Endothelial cell of umbilical vein (primary cell): ENCODE measurements at regions of chr5 and their contacts with region 1.

Region 1: GRCh38 chr5:170434966-170435605 is 45.9 kb upstream of the KCNMB1 start:
- DNase-seq: peak; percentile 52
- H3K4me3 ChIP-seq: no peak overlapping the region
- H3K27ac ChIP-seq: no peak overlapping the region
- H3K4me1 ChIP-seq: no peaks in the 10 kb centered on the region
- H3K27me3 ChIP-seq: peaks cover 4% of the 10 kb centered on the region in 2 experiments
- CTCF ChIP-seq: peak; percentile 94 to 98
- POLR2A ChIP-seq: no peak

Region 2: GRCh38 chr5:170253844-170254455 is 181.1 kb before region 1 on chr5:
- CTCF ChIA-PET with region 1: no interaction called
- POLR2A ChIA-PET with region 1: no interaction called
- dilution Hi-C with region 1: no loop called
- intact Hi-C with region 1: no loop called
- DNase-seq: no peak
- H3K4me3 ChIP-seq: no peak overlapping the region
- H3K27ac ChIP-seq: no peak overlapping the region
- H3K4me1 ChIP-seq: no peaks in the 10 kb centered on the region
- H3K27me3 ChIP-seq: peaks cover 7 to 35% of the 10 kb centered on the region in 2 experiments
- CTCF ChIP-seq: no peak
- POLR2A ChIP-seq: no peak

Region 3: GRCh38 chr5:170491479-170491878 is 56.4 kb after region 1 on chr5:
- CTCF ChIA-PET with region 1: interaction called, 4 read pairs
- POLR2A ChIA-PET with region 1: no interaction called
- dilution Hi-C with region 1: no loop called
- intact Hi-C with region 1: loop called (anchors 1 kb)
- DNase-seq: peak; percentile 91
- H3K4me3 ChIP-seq: no peak overlapping the region
- H3K27ac ChIP-seq: peak overlapping the region; percentile 75
- H3K4me1 ChIP-seq: peaks cover 15% of the 10 kb centered on the region
- H3K27me3 ChIP-seq: no peaks in the 10 kb centered on the region
- CTCF ChIP-seq: no peak
- POLR2A ChIP-seq: peak; percentile 25

Region 4: DNA sequence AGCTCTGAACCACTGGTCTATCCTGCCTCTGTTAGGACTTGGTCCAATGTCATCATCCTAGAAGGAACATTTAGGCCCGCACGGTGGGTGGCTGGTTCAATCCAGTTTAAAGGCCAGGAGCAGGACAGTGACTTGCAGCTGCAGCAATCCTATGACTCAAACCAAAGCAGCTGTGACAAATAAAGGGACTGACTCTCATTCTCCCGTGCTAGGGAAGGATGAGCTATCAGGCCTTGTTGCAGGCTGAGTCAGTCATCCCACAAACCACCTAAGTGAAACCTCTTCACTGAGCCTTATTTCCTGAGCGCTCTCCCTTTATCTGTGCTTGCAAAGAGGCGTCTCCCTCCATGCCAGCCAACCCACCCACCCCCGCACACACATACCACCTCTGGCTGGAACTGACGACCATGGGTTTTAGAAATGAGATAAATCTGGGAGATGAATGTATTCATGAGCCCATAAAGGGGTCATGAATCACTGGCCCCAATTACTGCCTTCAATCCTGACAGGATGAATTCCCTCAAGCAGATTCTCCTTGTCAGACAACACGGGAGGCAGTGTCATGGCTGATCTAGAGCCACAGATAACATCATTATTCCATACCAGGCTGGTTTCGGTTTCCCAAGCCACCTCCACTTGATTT is 162.1 kb after region 1 on chr5:
- CTCF ChIA-PET with region 1: interaction called, 23 read pairs
- POLR2A ChIA-PET with region 1: no interaction called
- dilution Hi-C with region 1: no loop called
- intact Hi-C with region 1: no loop called
- DNase-seq: no peak
- H3K4me3 ChIP-seq: no peak overlapping the region
- H3K27ac ChIP-seq: no peak overlapping the region
- H3K4me1 ChIP-seq: peaks cover 2% of the 10 kb centered on the region
- H3K27me3 ChIP-seq: no peaks in the 10 kb centered on the region
- CTCF ChIP-seq: no peak
- POLR2A ChIP-seq: no peak

Region 5: GRCh38 chr5:170614720-170615119 is 179.6 kb after region 1 on chr5:
- CTCF ChIA-PET with region 1: interaction called, 288 read pairs
- POLR2A ChIA-PET with region 1: no interaction called
- dilution Hi-C with region 1: no loop called
- intact Hi-C with region 1: no loop called
- DNase-seq: no peak
- H3K4me3 ChIP-seq: no peak overlapping the region
- H3K27ac ChIP-seq: no peak overlapping the region
- H3K4me1 ChIP-seq: no peaks in the 10 kb centered on the region
- H3K27me3 ChIP-seq: peaks cover 2 to 5% of the 10 kb centered on the region in 2 experiments
- CTCF ChIP-seq: no peak
- POLR2A ChIP-seq: no peak